CD8-positive, alpha-beta T cell (primary cell): ENCODE measurements at regions of chr3 and their contacts with region 1.

Region 1: GRCh38 chr3:31550452-31551251 is 17.9 kb downstream of the STT3B start:
- DNase-seq: peak in 2 of 9 experiments; percentile 59 to 72
- ATAC-seq: peak; percentile 73
- H3K4me3 ChIP-seq: no peak overlapping the region
- H3K4me3 Mint-ChIP-seq: peak overlapping the region; percentile 33
- H3K27ac ChIP-seq: no peak overlapping the region
- H3K27ac Mint-ChIP-seq: peak overlapping the region; percentile 70
- H3K4me1 ChIP-seq: peaks cover 57% of the 10 kb centered on the region
- H3K4me1 Mint-ChIP-seq: peaks cover 83% of the 10 kb centered on the region
- H3K27me3 ChIP-seq: no peaks in the 10 kb centered on the region
- H3K27me3 Mint-ChIP-seq: no peaks in the 10 kb centered on the region
- CTCF ChIP-seq: peak; percentile 64

Region 2: GRCh38 chr3:31539275-31539674 is 11.4 kb before region 1 on chr3:
- CTCF ChIA-PET with region 1: interaction called, 4 read pairs
- POLR2A ChIA-PET with region 1: interaction called, 4 read pairs
- intact Hi-C with region 1: loop called (anchors 1 to 2 kb)
- DNase-seq: no peak
- ATAC-seq: no peak
- H3K4me3 ChIP-seq: no peak overlapping the region
- H3K4me3 Mint-ChIP-seq: peak overlapping the region; percentile 61
- H3K27ac ChIP-seq: no peak overlapping the region
- H3K27ac Mint-ChIP-seq: peak overlapping the region; percentile 12
- H3K4me1 ChIP-seq: peaks cover 69% of the 10 kb centered on the region
- H3K4me1 Mint-ChIP-seq: peaks cover 90% of the 10 kb centered on the region
- H3K27me3 ChIP-seq: no peaks in the 10 kb centered on the region
- H3K27me3 Mint-ChIP-seq: no peaks in the 10 kb centered on the region
- CTCF ChIP-seq: no peak

Region 3: GRCh38 chr3:31567036-31567435 is 16.4 kb after region 1 on chr3:
- CTCF ChIA-PET with region 1: interaction called, 6 read pairs
- POLR2A ChIA-PET with region 1: no interaction called
- intact Hi-C with region 1: loop called in 1 of 2 experiments (anchors 2 kb)
- DNase-seq: peak in 5 of 9 experiments; percentile 34 to 70 (median 48)
- ATAC-seq: peak; percentile 82
- H3K4me3 ChIP-seq: no peak overlapping the region
- H3K4me3 Mint-ChIP-seq: peak overlapping the region; percentile 27
- H3K27ac ChIP-seq: no peak overlapping the region
- H3K27ac Mint-ChIP-seq: no peak overlapping the region
- H3K4me1 ChIP-seq: peaks cover 74% of the 10 kb centered on the region
- H3K4me1 Mint-ChIP-seq: peaks cover 86% of the 10 kb centered on the region
- H3K27me3 ChIP-seq: no peaks in the 10 kb centered on the region
- H3K27me3 Mint-ChIP-seq: no peaks in the 10 kb centered on the region
- CTCF ChIP-seq: peak; percentile 75

Region 4: DNA sequence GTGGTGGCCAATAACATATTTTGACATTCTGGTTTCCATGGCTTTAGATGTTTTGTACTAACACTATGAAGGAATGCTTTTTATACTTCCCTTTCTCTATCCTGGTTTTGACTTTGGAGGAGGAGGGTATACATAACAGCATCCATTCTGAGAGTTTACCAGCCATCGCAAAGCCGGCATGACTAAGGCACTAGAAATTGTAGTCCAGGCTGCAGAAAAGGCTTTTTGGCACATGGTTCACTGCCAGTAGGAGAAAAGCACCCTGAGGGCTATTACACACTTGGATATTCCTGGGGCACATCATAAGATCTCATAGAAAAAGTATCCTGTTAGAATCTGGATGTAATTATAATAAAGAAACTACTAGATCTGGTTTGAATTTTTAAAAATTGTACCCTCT is 83.8 kb after region 1 on chr3:
- CTCF ChIA-PET with region 1: no interaction called
- POLR2A ChIA-PET with region 1: no interaction called
- intact Hi-C with region 1: loop called in 1 of 2 experiments (anchors 5 kb)
- DNase-seq: no peak
- ATAC-seq: no peak
- H3K4me3 ChIP-seq: no peak overlapping the region
- H3K4me3 Mint-ChIP-seq: no peak overlapping the region
- H3K27ac ChIP-seq: no peak overlapping the region
- H3K27ac Mint-ChIP-seq: peak overlapping the region; percentile 39
- H3K4me1 ChIP-seq: peaks cover 42% of the 10 kb centered on the region
- H3K4me1 Mint-ChIP-seq: peaks cover 46% of the 10 kb centered on the region
- H3K27me3 ChIP-seq: no peaks in the 10 kb centered on the region
- H3K27me3 Mint-ChIP-seq: no peaks in the 10 kb centered on the region
- CTCF ChIP-seq: no peak

Region 5: DNA sequence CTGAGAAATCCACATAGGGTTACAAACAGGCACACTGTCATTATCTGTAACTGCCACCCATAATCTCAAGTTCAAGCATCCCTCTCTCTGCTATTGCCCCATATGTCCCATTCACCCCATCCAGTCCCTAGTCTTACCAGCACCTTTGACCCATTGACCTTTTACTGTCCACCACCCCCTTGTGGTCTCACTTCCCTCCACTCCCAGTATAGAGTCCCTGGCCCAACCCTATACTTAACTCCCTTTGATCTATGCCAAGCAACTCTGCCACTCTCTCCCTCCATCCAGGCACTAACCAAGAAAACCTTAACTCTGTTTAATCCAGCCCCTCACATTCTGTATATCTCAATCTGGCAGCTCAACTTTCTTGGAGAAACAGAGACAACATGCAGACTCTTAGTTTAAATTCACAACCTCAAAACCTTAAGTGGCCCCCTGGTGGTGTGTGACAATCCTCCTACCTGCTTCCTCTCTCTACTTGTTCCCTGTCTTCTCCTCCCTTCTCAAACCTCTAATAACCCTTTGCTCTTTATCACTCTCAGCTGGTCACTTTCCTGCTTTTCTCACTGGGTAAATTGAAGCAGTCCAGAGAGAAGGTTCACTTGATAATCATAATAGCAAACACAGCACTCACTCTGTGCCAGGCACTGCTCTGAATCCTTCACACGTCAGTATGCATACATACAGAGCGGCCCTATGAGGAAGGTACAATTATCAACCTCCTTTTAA is 144.8 kb after region 1 on chr3:
- CTCF ChIA-PET with region 1: interaction called, 3 read pairs
- POLR2A ChIA-PET with region 1: no interaction called
- intact Hi-C with region 1: loop called (anchors 5 kb)
- DNase-seq: peak in 4 of 9 experiments; percentile 22 to 44 (median 28)
- ATAC-seq: no peak
- H3K4me3 ChIP-seq: no peak overlapping the region
- H3K4me3 Mint-ChIP-seq: no peak overlapping the region
- H3K27ac ChIP-seq: no peak overlapping the region
- H3K27ac Mint-ChIP-seq: no peak overlapping the region
- H3K4me1 ChIP-seq: peaks cover 4% of the 10 kb centered on the region
- H3K4me1 Mint-ChIP-seq: no peaks in the 10 kb centered on the region
- H3K27me3 ChIP-seq: no peaks in the 10 kb centered on the region
- H3K27me3 Mint-ChIP-seq: no peaks in the 10 kb centered on the region
- CTCF ChIP-seq: no peak